Spleen (tissue), 13 donors: ENCODE measurements at regions of chr11 and their contacts with region 1.

Region 1: DNA sequence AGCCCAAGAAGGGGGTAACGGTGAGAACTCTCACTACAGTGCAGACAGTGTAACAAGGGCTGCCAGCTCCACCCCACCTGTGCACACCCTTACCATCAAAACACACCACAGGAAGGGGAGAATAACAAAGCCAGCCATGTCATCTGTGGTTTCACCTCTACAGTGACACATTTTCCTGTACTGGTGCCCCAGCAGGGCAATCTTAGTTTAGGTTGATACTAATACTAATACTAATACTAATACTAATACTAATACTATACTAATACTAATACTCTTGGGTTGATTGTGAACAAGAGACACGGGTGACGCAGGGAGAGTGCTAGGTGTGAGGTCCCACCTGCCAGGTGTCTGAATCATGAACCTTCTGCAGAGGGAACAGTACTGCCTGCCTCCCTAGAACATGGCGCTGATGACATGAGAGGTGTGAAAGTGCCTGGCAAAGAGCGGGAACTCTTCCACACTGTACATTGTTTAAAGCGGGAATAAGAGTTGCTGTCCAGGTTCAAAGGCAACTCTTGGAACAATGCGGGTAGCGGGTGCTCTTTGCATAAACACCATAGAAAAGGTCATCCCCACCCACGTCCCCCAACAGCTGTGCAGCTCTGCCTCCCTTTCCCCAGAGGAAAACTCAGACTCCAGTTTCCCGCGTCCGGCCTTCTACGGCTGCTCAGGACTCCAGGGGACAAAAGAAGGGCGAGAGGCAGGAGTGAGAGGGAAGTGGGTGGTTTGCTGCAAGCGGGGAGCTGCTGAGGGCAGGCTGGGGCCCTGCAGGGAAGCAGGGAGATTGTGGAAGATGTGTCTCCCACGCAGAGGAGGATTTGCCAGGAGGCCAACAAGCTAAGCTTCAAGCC is 25.0 kb upstream of the TMPRSS4 start:
- DNase-seq: no peak
- H3K4me3 ChIP-seq: no peak overlapping the region
- H3K27ac ChIP-seq: peak overlapping the region in 6 of 8 donors; percentile 4 to 81 (median 64)
- H3K4me1 ChIP-seq: peaks cover 4 to 51% (median 38%) of the 10 kb centered on the region in 6 donors
- H3K27me3 ChIP-seq: no peaks in the 10 kb centered on the region
- CTCF ChIP-seq: no peak
- POLR2A ChIP-seq: no peak

Region 2: DNA sequence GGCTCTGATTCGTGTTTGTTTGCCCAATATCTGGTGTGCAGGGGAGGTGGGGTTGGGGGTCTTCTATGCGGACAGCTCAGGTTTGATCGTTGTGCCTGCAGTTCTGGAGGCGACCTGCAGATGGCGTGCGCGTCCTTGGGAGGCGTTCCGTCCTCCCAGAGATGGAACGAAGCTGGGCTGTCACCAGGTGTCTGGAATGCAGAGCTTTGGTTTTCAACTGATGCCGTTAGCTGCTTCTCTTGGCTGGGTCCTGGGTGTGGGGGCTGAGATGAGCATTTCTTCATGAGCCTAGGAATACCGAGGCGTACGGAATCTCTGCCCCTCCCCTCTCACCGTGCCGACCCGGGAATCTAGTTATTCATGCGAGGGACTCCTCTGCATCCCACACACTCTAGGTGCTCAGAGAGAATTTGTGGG is 625.6 kb before region 1 on chr11:
- intact Hi-C with region 1: loop called (anchors 5 kb)
- DNase-seq: peak; percentile 86
- H3K4me3 ChIP-seq: peak overlapping the region in 1 of 8 donors; percentile 31
- H3K27ac ChIP-seq: no peak overlapping the region
- H3K4me1 ChIP-seq: peaks cover 0 to 8% (median 3%) of the 10 kb centered on the region in 6 donors
- H3K27me3 ChIP-seq: peaks cover 0 to 10% (median 0%) of the 10 kb centered on the region in 7 donors
- CTCF ChIP-seq: peak; percentile 64 to 90 (median 85)
- POLR2A ChIP-seq: no peak

Region 3: DNA sequence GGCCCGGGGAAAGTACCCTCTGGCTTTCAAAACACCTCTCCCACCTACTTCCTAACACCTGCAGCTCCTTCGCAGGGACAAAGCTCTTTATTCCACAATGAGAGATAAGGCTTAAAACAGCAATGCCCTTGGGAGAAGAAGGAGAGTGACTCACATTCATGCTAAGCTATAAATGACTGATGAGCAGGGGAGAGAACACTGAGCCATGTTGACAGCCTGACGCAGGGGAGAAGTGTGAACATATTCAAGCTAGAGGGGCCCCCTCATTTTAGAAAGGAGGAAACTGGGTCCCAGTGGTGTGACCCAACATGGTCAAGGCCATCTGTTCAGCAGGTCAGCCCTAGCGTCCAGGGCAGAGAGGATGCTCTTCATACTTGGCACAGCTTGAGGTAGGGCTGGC is 426.6 kb before region 1 on chr11:
- intact Hi-C with region 1: no loop called
- DNase-seq: no peak
- H3K4me3 ChIP-seq: no peak overlapping the region
- H3K27ac ChIP-seq: no peak overlapping the region
- H3K4me1 ChIP-seq: no peaks in the 10 kb centered on the region
- H3K27me3 ChIP-seq: no peaks in the 10 kb centered on the region
- CTCF ChIP-seq: no peak
- POLR2A ChIP-seq: no peak

Region 4: GRCh38 chr11:117807482-117808327 is 244.1 kb before region 1 on chr11:
- intact Hi-C with region 1: loop called (anchors 10 kb)
- DNase-seq: peak; percentile 91
- H3K4me3 ChIP-seq: no peak overlapping the region
- H3K27ac ChIP-seq: no peak overlapping the region
- H3K4me1 ChIP-seq: peaks cover 4 to 30% (median 16%) of the 10 kb centered on the region in 6 donors
- H3K27me3 ChIP-seq: peaks cover 0 to 7% (median 0%) of the 10 kb centered on the region in 7 donors
- CTCF ChIP-seq: peak; percentile 86 to 93 (median 91)
- POLR2A ChIP-seq: no peak

Region 5: GRCh38 chr11:117843666-117844484 is 208.0 kb before region 1 on chr11:
- intact Hi-C with region 1: loop called (anchors 10 kb)
- DNase-seq: peak; percentile 94
- H3K4me3 ChIP-seq: no peak overlapping the region
- H3K27ac ChIP-seq: peak overlapping the region in 7 of 8 donors; percentile 0 to 66 (median 46)
- H3K4me1 ChIP-seq: peaks cover 4 to 43% (median 22%) of the 10 kb centered on the region in 6 donors
- H3K27me3 ChIP-seq: no peaks in the 10 kb centered on the region
- CTCF ChIP-seq: peak; percentile 98 to 99 (median 99)
- POLR2A ChIP-seq: no peak